Activated CD4-positive, alpha-beta T cell treated with anti-CD3 and anti-CD28 coated beads, Interleukin-2, amount 10 ng/mL, durations not matched to agents 24 days and 14 days (primary cell): ENCODE measurements at regions of chr4 and their contacts with region 1.

Region 1: DNA sequence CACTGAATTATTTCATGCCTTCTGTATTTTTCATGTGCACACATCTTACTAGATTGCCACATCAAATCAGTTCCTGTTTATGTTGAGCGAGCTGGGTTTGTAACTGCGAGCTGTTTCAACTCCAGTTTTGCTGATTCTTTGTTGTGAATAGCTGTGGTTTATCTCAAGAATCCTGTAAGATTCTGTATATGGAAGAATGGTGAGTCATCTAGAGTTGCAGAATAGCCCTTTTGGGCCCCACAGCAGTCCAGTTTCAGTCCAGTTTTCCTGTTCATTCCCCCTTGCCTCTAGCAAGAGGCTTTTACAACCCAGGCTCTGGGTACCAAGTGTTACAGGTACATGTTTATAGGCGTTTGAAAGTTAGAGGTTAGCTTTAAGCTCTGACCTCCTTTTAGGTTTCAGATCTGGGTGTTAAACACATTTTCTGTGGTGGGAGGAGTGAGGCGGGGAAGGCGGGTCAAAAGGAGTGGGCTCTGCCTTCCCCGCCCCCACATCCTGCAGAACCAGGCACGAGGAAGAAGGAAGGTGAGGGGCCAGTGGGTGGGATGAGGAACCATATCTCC is 32.7 kb downstream of the TBC1D14 start:
- DNase-seq: peak; percentile 83
- H3K4me3 Mint-ChIP-seq: peak overlapping the region; percentile 73
- H3K27ac Mint-ChIP-seq: peak overlapping the region; percentile 87
- H3K4me1 Mint-ChIP-seq: peaks cover 43% of the 10 kb centered on the region
- H3K27me3 Mint-ChIP-seq: no peaks in the 10 kb centered on the region

Region 2: DNA sequence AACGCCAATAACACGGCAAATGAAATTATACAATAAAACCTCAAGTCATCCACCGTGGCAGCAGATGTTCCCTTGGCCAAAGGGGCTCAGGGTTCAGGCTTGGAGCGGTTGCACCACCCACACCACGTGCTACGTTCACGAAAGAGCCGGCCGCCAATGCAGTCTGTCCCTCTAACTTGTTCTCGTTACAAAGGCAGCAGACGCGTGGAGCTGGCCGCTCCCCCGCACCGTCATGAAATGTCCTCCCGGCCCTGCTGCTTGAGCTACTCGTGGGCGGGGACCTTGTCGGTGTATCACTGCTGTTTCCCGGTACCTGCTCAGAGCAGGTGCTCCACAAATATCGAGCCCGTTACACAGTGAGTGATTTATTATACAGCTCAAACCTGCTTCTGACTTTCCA is 403.7 kb before region 1 on chr4:
- intact Hi-C with region 1: no loop called
- DNase-seq: no peak
- H3K4me3 Mint-ChIP-seq: no peak overlapping the region
- H3K27ac Mint-ChIP-seq: no peak overlapping the region
- H3K4me1 Mint-ChIP-seq: no peaks in the 10 kb centered on the region
- H3K27me3 Mint-ChIP-seq: no peaks in the 10 kb centered on the region

Region 3: GRCh38 chr4:6909073-6909965 is 33.0 kb before region 1 on chr4 and contains the start of gene TBC1D14:
- intact Hi-C with region 1: loop called (anchors 5 kb)
- DNase-seq: peak; percentile 95
- H3K4me3 Mint-ChIP-seq: peak within 1 kb of the TSS; percentile 96
- H3K27ac Mint-ChIP-seq: peak within 1 kb of the TSS; percentile 95
- H3K4me1 Mint-ChIP-seq: peaks cover 47% of the 10 kb centered on the region
- H3K27me3 Mint-ChIP-seq: no peaks in the 10 kb centered on the region
- total RNA-seq, gene TBC1D14: 47.2 and 47.3 TPM in 2 replicates

Region 4: DNA sequence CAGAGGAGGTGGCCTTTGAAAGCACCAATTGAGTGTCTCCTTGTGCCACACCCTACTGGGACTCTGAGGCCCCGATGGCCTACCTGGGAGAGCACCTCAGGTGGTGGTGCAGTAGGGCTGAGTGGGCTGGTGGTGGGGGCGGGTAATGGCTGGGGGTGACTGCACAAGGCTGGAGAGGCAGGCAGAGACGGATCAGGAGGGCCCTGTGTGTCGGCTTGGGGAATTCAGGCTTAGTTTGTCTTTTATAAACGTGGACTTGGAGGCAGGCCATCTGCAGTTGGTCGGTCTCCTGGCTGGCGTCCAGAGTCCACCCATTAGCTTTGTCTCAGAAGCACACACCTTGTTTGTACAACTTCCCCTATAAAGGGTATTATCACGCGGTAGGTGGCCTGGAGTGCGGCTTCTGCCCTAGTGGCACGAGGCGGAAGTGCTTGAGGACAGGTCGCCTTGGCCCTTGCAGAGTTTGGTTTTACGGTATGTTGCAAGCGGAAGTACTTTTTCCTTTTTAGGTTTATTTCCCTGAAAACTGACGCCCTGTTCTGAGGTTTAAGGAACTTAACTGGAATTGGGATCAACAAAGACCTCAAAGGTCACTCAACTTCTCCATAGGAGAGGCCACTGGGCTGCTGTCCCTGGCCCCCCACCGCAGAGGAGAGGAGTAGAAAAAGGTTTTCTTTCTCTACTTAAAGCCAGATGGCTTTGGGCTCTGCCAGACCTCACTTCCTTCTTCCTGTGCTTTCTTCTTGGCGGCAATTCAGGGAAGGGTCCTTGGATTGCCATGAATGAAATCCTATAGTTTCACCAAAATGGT is 24.7 kb before region 1 on chr4:
- intact Hi-C with region 1: loop called (anchors 1 kb)
- DNase-seq: peak; percentile 78
- H3K4me3 Mint-ChIP-seq: peak overlapping the region; percentile 64
- H3K27ac Mint-ChIP-seq: peak overlapping the region; percentile 89
- H3K4me1 Mint-ChIP-seq: peaks cover 58% of the 10 kb centered on the region
- H3K27me3 Mint-ChIP-seq: no peaks in the 10 kb centered on the region

Region 5: DNA sequence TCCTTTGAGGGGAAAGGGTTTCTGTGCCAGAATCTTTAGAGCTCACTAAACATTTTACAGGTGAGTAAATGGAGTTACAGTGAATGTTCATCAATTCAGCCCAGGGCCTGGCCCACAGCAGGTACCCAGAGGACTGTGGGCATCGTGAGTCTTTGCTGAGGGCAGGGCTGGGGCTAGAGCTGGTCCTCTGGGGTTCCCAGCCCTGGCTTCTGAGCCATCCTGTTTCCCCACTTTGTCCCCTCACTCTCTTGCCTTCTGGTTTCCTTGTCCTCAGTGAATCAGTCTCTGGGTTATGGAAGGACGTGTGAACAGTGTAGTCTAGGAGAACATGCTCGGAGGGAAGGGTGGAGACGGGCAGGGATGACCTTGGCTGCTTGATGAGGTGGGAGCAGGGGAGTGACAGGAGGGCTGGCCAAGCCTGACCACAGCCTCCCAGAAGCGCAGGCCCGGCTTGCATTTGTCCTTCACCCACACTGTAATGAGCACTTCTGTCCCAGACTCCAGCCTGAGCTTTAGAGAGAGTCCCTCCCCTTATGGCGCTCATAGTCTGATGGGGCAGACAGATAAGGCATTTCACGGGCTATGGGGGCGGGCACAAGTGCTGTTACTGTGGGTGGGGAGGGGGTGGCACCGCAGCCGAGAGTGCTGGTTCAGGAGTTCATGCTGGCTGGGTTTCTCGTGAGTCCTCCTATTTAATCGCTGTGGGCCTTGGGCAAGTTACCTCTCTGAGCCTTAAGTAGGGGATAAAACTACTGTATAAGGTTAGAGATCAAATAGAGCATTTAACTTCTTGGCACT is 15.4 kb before region 1 on chr4:
- intact Hi-C with region 1: loop called (anchors 1 kb)
- DNase-seq: peak; percentile 87
- H3K4me3 Mint-ChIP-seq: peak overlapping the region; percentile 68
- H3K27ac Mint-ChIP-seq: peak overlapping the region; percentile 48
- H3K4me1 Mint-ChIP-seq: peaks cover 58% of the 10 kb centered on the region
- H3K27me3 Mint-ChIP-seq: no peaks in the 10 kb centered on the region